CD4-positive, alpha-beta memory T cell (primary cell): ENCODE measurements at regions of chr12 and their contacts with region 1.

Region 1: GRCh38 chr12:109573029-109573913 is at the starts of genes MMAB and MVK:
- DNase-seq: peak; percentile 99 to 100 (median 99)
- H3K4me3 ChIP-seq: peak within 1 kb of the TSS; percentile 73 to 82
- H3K4me3 Mint-ChIP-seq: peak within 1 kb of the TSS; percentile 91 to 95 (median 92)
- H3K27ac ChIP-seq: peak within 1 kb of the TSS; percentile 92
- H3K27ac Mint-ChIP-seq: peak within 1 kb of the TSS; percentile 91 to 99 (median 98)
- H3K4me1 ChIP-seq: peaks cover 19% of the 10 kb centered on the region
- H3K4me1 Mint-ChIP-seq: peaks cover 18 to 28% (median 22%) of the 10 kb centered on the region in 4 donors
- H3K27me3 ChIP-seq: no peaks in the 10 kb centered on the region
- H3K27me3 Mint-ChIP-seq: no peaks in the 10 kb centered on the region
- total RNA-seq, gene MMAB: 16.0 to 16.9 TPM
- total RNA-seq, gene MVK: 10.0 to 11.0 TPM

Region 2: DNA sequence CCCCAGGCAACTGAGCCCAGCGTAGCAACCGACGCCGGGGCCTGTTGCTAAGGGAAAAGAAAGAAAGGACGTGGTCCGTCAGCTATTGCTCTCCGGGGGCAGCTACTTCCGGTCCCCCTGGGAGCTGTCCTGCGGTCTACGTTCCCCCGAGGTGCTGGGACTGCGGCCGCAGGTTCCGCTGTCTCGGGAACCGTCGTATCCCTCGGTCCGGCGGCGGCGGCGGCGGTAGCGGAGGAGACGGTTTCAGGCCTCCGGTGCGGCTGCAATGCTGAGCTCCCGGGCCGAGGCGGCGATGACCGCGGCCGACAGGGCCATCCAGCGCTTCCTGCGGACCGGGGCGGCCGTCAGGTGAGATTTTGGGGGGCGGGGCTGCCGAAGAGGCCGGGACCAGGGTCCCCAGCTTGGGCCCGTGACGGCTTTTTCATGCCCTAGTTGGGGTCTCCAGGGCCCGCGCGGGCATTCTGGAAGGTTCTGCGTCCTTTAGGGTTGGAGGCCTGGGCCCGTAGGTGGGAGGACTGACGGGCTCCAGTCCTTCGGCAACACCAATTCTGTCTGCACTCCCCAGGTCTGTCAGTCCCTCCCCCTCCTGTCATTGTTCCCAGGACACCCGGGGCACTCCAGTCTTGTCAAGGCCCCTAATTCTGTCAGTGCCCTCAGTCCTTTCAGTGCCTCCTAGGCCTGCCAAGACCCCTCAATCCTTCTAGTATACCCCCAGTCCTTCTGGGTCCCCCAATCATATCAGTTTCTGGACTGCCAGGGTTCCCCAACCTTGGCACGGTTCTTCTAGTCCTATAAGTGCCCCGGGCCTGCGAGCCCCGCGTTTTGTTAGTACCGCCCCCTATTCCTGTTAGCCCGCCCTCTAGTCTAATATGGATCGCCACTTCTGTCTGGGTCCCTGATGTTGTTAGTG is 520.6 kb before region 1 on chr12 and contains the start of gene USP30:
- CTCF ChIA-PET with region 1: no interaction called
- POLR2A ChIA-PET with region 1: no interaction called
- intact Hi-C with region 1: loop called (anchors 2 kb)
- DNase-seq: peak; percentile 75 to 83 (median 79)
- H3K4me3 ChIP-seq: peak within 1 kb of the TSS; percentile 87 to 96
- H3K4me3 Mint-ChIP-seq: peak within 1 kb of the TSS; percentile 93 to 100 (median 96)
- H3K27ac ChIP-seq: peak within 1 kb of the TSS; percentile 85
- H3K27ac Mint-ChIP-seq: peak within 1 kb of the TSS; percentile 87 to 100 (median 98)
- H3K4me1 ChIP-seq: peaks cover 18% of the 10 kb centered on the region
- H3K4me1 Mint-ChIP-seq: peaks cover 10 to 27% (median 17%) of the 10 kb centered on the region in 4 donors
- H3K27me3 ChIP-seq: no peaks in the 10 kb centered on the region
- H3K27me3 Mint-ChIP-seq: no peaks in the 10 kb centered on the region
- total RNA-seq, gene USP30: 8.1 to 14.2 TPM

Region 3: GRCh38 chr12:109477185-109477962 is 95.9 kb before region 1 on chr12 and contains the starts of genes KCTD10 and UBE3B:
- CTCF ChIA-PET with region 1: no interaction called
- POLR2A ChIA-PET with region 1: interaction called, 9 read pairs
- intact Hi-C with region 1: loop called (anchors 1 kb)
- DNase-seq: peak; percentile 85 to 89 (median 87)
- H3K4me3 ChIP-seq: peak within 1 kb of the TSS; percentile 93 to 97
- H3K4me3 Mint-ChIP-seq: peak within 1 kb of the TSS; percentile 97 to 99 (median 97)
- H3K27ac ChIP-seq: peak within 1 kb of the TSS; percentile 87
- H3K27ac Mint-ChIP-seq: peak within 1 kb of the TSS; percentile 98 to 100 (median 99)
- H3K4me1 ChIP-seq: peaks cover 38% of the 10 kb centered on the region
- H3K4me1 Mint-ChIP-seq: peaks cover 31 to 67% (median 37%) of the 10 kb centered on the region in 4 donors
- H3K27me3 ChIP-seq: no peaks in the 10 kb centered on the region
- H3K27me3 Mint-ChIP-seq: no peaks in the 10 kb centered on the region
- total RNA-seq, gene KCTD10: 29.2 to 31.9 TPM
- total RNA-seq, gene UBE3B: 55.8 to 58.1 TPM

Region 4: DNA sequence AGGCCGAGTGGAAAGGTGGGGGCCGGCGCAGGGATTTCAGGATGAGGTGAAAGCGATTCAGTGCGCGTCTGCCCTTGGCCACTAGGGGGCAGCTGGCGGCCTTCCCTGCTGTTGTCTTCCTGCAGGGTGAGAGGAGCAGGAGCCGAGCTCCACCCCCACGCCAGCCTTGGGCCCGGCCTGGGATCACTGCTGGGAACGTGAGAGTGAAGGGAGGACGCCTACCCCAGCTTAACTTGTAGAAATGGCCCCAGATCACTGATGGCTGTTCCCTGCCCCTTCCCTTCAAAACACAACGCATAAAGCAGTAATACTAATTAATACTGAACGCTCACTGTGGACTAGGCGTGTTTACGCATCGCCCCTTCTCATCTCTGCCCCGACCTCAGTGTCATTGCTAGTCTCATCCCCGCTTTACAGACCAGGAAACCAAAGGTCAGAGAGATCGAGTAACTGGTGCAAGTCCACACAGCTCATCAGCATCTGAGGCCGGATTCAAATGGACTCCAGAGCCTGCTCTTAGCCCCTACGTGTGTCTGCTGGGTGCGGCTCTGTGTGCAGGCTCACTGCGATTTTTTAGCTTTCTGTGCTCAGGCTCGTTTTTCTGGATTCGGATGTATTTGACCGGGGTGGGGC is 24.6 kb after region 1 on chr12:
- CTCF ChIA-PET with region 1: interaction called, 37 read pairs
- POLR2A ChIA-PET with region 1: no interaction called
- intact Hi-C with region 1: no loop called
- DNase-seq: peak in 4 of 5 donors; percentile 44 to 47 (median 46)
- H3K4me3 ChIP-seq: no peak overlapping the region
- H3K4me3 Mint-ChIP-seq: peak overlapping the region in 3 of 8 donors; percentile 35 to 54 (median 40)
- H3K27ac ChIP-seq: no peak overlapping the region
- H3K27ac Mint-ChIP-seq: peak overlapping the region in 2 of 7 donors; percentile 50 to 86
- H3K4me1 ChIP-seq: peaks cover 24% of the 10 kb centered on the region
- H3K4me1 Mint-ChIP-seq: peaks cover 17 to 42% (median 26%) of the 10 kb centered on the region in 4 donors
- H3K27me3 ChIP-seq: no peaks in the 10 kb centered on the region
- H3K27me3 Mint-ChIP-seq: no peaks in the 10 kb centered on the region

Region 5: GRCh38 chr12:109713187-109713984 is 140.1 kb after region 1 on chr12 and contains the start of gene FAM222A:
- CTCF ChIA-PET with region 1: no interaction called
- POLR2A ChIA-PET with region 1: interaction called, 3 read pairs
- intact Hi-C with region 1: loop called (anchors 1 kb)
- DNase-seq: peak; percentile 97 to 98 (median 98)
- H3K4me3 ChIP-seq: peak within 1 kb of the TSS in 1 of 2 donors; percentile 60
- H3K4me3 Mint-ChIP-seq: peak within 1 kb of the TSS; percentile 27 to 84 (median 72)
- H3K27ac ChIP-seq: peak within 1 kb of the TSS; percentile 30
- H3K27ac Mint-ChIP-seq: peak within 1 kb of the TSS in 4 of 7 donors; percentile 6 to 66 (median 43)
- H3K4me1 ChIP-seq: peaks cover 12% of the 10 kb centered on the region
- H3K4me1 Mint-ChIP-seq: peaks cover 0 to 6% (median 1%) of the 10 kb centered on the region in 4 donors
- H3K27me3 ChIP-seq: peaks cover 18% of the 10 kb centered on the region
- H3K27me3 Mint-ChIP-seq: peaks cover 13 to 18% of the 10 kb centered on the region in 2 donors
- total RNA-seq, gene FAM222A: 0.55 to 0.69 TPM

Region 6: GRCh38 chr12:109899783-109900751 is 326.8 kb after region 1 on chr12 and contains the start of gene TCHP:
- CTCF ChIA-PET with region 1: no interaction called
- POLR2A ChIA-PET with region 1: no interaction called
- intact Hi-C with region 1: loop called (anchors 1 kb)
- DNase-seq: peak; percentile 76 to 83 (median 80)
- H3K4me3 ChIP-seq: peak within 1 kb of the TSS; percentile 72 to 87
- H3K4me3 Mint-ChIP-seq: peak within 1 kb of the TSS; percentile 90 to 99 (median 94)
- H3K27ac ChIP-seq: peak within 1 kb of the TSS; percentile 70
- H3K27ac Mint-ChIP-seq: peak within 1 kb of the TSS; percentile 85 to 99 (median 97)
- H3K4me1 ChIP-seq: peaks cover 22% of the 10 kb centered on the region
- H3K4me1 Mint-ChIP-seq: peaks cover 14 to 37% (median 23%) of the 10 kb centered on the region in 4 donors
- H3K27me3 ChIP-seq: no peaks in the 10 kb centered on the region
- H3K27me3 Mint-ChIP-seq: no peaks in the 10 kb centered on the region
- total RNA-seq, gene TCHP: 41.4 to 45.0 TPM

Region 7: GRCh38 chr12:110048242-110049027 is 475.2 kb after region 1 on chr12 and contains the start of gene C12orf76:
- CTCF ChIA-PET with region 1: no interaction called
- POLR2A ChIA-PET with region 1: no interaction called
- intact Hi-C with region 1: loop called (anchors 10 kb)
- DNase-seq: peak; percentile 89 to 94 (median 91)
- H3K4me3 ChIP-seq: peak within 1 kb of the TSS; percentile 40 to 74
- H3K4me3 Mint-ChIP-seq: peak within 1 kb of the TSS; percentile 89 to 98 (median 94)
- H3K27ac ChIP-seq: peak within 1 kb of the TSS; percentile 61
- H3K27ac Mint-ChIP-seq: peak within 1 kb of the TSS; percentile 89 to 100 (median 98)
- H3K4me1 ChIP-seq: peaks cover 25% of the 10 kb centered on the region
- H3K4me1 Mint-ChIP-seq: peaks cover 20 to 49% (median 26%) of the 10 kb centered on the region in 4 donors
- H3K27me3 ChIP-seq: no peaks in the 10 kb centered on the region
- H3K27me3 Mint-ChIP-seq: no peaks in the 10 kb centered on the region
- total RNA-seq, gene C12orf76: 26.4 to 33.5 TPM